ENCODE measurements at regions of chr5 and their contacts with region 1.

Region 1: DNA sequence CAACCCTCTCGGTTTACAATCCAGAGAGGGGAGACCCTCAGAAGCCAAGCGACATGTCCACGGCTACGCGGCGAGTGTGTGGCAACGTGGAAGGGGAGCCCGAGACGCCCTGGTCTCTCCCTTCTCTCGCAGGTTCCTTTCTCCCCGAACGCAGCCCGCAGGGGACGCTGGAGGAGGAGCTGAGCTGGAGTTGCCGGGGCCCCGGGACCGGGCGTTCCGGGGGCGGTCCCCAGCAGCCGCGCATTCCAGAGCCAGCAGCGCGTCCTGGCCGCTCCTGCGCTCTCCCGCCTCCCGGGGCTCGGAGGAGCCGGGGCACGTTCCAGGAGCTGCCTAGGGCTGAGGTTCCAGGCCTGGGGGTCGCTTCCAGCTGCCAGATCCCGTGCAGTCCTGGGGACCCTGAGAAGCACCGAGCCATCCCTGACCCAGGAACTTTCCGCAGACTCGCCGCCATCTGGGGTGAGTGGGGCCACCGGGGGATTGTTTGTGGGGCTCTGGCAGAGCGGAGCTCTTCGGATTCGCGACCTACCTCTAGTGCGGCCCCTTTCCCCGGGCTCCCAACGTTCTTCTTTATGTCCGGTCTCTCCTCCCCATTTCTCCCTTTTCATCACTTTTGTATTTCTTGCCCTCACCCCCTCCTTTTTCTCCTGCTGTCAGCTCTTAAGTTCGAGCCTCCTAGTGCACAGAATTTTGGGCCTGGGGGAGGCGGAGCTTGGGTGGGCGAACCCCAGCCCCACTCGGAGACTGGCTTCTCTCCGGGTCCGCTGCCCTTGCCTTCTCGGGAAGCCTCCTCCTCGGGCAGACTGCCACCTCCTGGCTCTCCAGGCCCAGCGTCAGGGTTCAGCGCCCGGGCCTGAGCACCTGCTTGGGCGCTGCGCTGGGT is at the start of gene SMIM3:
- DNase-seq: no peak
- ATAC-seq: peak; percentile 82
- H3K4me3 ChIP-seq: peak within 1 kb of the TSS; percentile 87 to 88
- H3K27ac ChIP-seq: peak within 1 kb of the TSS; percentile 86
- H3K4me1 ChIP-seq: peaks cover 54% of the 10 kb centered on the region
- H3K27me3 ChIP-seq: no peaks in the 10 kb centered on the region
- CTCF ChIP-seq: peak; percentile 79
- total RNA-seq, gene SMIM3: 55.2 TPM

Region 2: DNA sequence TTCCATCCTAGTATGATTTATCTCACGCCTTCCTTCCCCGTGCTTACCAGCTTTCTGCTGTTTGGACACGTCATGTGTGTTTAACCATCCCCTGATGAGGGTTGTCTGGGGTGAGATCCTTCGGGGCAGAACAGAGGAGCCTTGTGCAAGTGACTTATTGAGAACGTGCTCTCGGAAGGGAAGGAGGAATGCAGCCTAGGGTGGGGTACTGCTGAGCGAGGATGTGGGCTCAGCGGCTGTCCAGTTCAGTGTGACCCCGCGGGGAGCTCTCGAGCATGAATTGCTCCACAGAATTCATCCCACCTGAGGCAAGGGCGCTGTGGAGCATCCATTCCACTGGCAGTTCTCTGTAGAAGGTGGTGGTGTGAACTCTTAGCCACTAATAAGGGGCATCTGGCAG is 113.7 kb before region 1 on chr5:
- CTCF ChIA-PET with region 1: no interaction called
- POLR2A ChIA-PET with region 1: no interaction called
- in situ Hi-C with region 1: no loop called
- intact Hi-C with region 1: no loop called
- DNase-seq: no peak
- ATAC-seq: no peak
- H3K4me3 ChIP-seq: no peak overlapping the region
- H3K27ac ChIP-seq: no peak overlapping the region
- H3K4me1 ChIP-seq: no peaks in the 10 kb centered on the region
- H3K27me3 ChIP-seq: no peaks in the 10 kb centered on the region
- CTCF ChIP-seq: no peak

Region 3: DNA sequence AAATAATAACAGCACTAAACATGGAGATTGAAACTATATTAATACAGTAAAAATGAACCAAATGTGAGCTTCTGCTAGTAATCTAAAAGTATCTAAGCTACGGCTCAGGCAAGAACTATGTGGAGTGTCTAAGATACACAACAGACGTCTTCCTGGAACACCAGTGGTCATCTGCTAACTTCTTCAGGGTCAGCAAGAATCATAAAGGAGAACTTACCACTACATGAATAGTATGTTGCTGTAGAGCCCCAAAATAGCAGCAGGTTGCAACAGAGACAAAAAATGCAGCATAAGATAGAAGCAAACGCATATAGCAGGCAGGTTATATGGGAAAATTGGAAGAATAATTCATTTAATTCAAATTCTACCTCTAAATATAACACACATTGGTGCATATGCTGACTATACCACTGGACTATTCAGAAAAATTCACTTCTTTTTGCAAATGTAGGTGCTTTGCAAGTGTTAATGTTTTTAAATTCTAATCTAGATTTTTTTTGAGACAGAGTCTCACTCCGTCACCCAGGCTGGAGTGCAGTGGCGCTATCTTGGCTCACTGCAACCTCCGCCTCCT is 47.0 kb before region 1 on chr5:
- CTCF ChIA-PET with region 1: interaction called, 11 read pairs
- POLR2A ChIA-PET with region 1: interaction called, 3 read pairs
- in situ Hi-C with region 1: no loop called
- intact Hi-C with region 1: no loop called
- DNase-seq: no peak
- ATAC-seq: no peak
- H3K4me3 ChIP-seq: no peak overlapping the region
- H3K27ac ChIP-seq: no peak overlapping the region
- H3K4me1 ChIP-seq: no peaks in the 10 kb centered on the region
- H3K27me3 ChIP-seq: no peaks in the 10 kb centered on the region
- CTCF ChIP-seq: no peak

Measured in Panc1 (cell line).